Heart right ventricle (tissue), 16 donors: ENCODE measurements at regions of chr10 and their contacts with region 1.

Region 1: DNA sequence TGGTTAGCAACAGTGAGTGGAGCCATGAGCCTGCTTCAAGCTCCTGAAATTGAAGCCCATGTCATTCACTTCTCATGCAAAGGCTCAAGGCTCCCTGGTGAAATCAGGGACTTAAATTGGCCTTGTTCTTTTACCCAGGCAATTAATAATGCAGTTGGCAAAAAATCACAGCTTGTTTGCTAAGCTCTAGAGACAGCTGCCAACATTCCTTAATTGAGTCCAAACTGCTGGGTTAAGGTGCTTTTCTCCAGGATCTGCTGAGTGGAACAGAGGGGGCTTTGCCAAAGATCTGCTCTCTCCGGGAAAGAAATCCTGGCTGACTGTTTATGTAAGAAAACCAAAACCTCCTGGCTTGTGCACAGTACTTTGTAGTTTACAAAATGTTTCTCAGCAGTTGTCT is 257.6 kb upstream of the GHITM start:
- DNase-seq: peak in 1 of 2 donors; percentile 26
- ATAC-seq: peak in 6 of 8 donors; percentile 45 to 84 (median 70)
- H3K4me3 ChIP-seq: no peak overlapping the region
- H3K27ac ChIP-seq: peak overlapping the region in 5 of 10 donors; percentile 16 to 52 (median 43)
- H3K4me1 ChIP-seq: peaks cover 0 to 25% (median 4%) of the 10 kb centered on the region in 9 donors
- H3K27me3 ChIP-seq: no peaks in the 10 kb centered on the region
- CTCF ChIP-seq: no peak

Region 2: DNA sequence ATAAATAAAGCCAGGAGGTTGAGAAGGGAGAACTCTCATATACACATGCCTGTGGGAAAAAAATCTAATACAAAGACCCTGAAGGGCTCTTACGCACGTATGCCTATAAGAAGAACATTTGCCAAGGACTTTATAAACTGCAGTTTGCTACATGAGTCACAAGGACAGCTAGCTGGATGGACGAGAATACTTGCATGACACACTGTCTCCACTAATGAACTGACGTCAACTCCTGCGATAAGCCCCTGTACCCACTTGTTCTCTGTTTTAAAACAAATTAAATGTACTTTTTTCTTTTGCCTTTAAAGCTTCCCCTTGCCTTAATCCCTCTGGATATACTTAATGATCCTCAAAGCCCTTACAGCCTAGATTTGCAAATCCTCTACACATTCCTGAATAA is 117.0 kb before region 1 on chr10:
- intact Hi-C with region 1: no loop called
- DNase-seq: no peak
- ATAC-seq: peak in 4 of 8 donors; percentile 16 to 70 (median 60)
- H3K4me3 ChIP-seq: no peak overlapping the region
- H3K27ac ChIP-seq: no peak overlapping the region
- H3K4me1 ChIP-seq: no peaks in the 10 kb centered on the region
- H3K27me3 ChIP-seq: no peaks in the 10 kb centered on the region
- CTCF ChIP-seq: no peak

Region 3: GRCh38 chr10:84097787-84098353 is 216.2 kb after region 1 on chr10:
- intact Hi-C with region 1: loop called in 2 of 10 experiments (anchors 5 kb)
- DNase-seq: no peak
- ATAC-seq: no peak
- H3K4me3 ChIP-seq: no peak overlapping the region
- H3K27ac ChIP-seq: no peak overlapping the region
- H3K4me1 ChIP-seq: peaks cover 5 to 25% (median 19%) of the 10 kb centered on the region in 9 donors
- H3K27me3 ChIP-seq: no peaks in the 10 kb centered on the region
- CTCF ChIP-seq: peak in 8 of 9 donors; percentile 34 to 69 (median 56)